ENCODE measurements at regions of chr19 and their contacts with region 1.

Region 1: GRCh38 chr19:1490311-1491113 is at the start of gene PCSK4:
- DNase-seq: peak; percentile 96
- H3K4me3 Mint-ChIP-seq: peak within 1 kb of the TSS; percentile 81
- H3K27ac Mint-ChIP-seq: peak within 1 kb of the TSS; percentile 81
- H3K4me1 Mint-ChIP-seq: peaks cover 11% of the 10 kb centered on the region
- H3K27me3 Mint-ChIP-seq: peaks cover 9% of the 10 kb centered on the region
- total RNA-seq, gene PCSK4: 2.1 and 2.6 TPM in 2 replicates

Region 2: DNA sequence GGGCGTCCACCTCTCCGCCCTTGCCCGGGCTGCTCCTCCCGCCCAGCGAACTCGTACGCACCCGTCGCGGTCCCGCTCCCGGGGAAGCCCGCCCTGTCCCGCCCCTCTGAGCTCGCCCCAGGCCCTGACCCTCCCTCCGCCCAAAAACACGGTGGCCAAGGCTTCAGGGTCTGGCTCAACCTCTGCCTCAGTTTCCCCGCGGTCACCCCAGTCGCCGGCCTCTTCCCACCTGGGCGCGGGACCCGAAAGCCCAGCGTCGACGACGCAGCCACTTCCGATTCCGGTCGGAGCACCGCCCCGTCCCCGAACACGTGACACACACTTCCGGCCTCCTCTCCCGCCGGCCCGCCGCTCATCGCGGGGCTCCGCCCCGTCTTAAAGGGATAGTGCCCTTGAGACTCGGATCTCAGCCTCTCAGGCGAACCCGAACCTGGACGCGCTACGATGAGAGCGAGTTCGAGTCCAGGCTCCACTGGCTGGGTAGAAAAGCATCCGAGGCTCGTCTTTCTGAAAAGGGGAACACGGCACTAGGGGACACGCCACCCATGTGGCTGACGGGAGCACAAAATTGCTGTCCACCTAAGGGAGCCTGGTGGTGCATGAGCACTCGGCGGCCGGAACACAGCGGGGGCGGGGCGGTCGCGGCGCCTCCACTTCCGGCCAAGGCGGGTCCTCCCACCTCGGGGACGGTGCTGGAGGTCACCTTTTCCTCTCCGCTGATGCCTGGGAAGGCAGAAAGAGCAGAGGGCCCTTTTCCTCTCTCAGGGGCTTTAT is 11.4 kb before region 1 on chr19 and contains the start of gene C19orf25:
- intact Hi-C with region 1: loop called (anchors 1 kb)
- DNase-seq: peak; percentile 92
- H3K4me3 Mint-ChIP-seq: peak within 1 kb of the TSS; percentile 96
- H3K27ac Mint-ChIP-seq: peak within 1 kb of the TSS; percentile 93
- H3K4me1 Mint-ChIP-seq: peaks cover 5% of the 10 kb centered on the region
- H3K27me3 Mint-ChIP-seq: no peaks in the 10 kb centered on the region
- total RNA-seq, gene C19orf25: 33.0 and 37.9 TPM in 2 replicates

Region 3: DNA sequence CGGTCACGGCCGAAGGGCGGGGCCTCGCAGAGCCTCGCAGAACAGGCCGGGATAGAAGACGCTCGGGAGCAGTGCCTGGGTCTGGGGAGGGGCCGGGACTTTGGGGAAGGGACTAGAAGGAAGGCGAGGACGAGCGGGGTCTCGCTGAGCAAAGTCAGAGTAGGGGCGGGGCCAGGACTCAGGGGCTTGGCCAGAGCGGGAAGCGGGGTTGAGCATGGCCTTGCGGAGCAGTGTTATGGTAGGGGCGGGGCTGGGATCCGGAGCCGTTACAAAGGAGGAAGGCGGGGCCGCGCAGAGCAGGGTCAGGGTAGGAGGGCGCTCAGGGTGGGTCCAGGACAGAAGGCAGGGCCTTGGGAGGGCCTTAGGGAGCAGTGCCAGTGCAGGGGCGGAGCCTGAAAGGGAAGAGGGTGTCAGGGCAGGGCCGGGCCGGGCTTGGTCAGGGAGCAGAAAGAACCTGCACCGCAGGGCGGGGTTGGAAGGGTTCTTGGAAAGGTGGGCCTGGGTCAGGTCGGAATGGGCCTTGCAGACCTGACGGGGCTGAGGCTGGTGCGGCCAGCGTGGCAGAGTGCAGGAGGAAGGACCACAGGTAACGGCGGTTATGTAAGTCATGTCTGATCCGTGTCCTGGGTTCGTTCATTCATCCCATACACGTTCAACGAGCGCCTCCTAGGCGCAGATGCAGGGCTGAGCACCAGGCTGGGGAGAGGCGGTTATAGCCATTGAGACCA is 322.1 kb after region 1 on chr19:
- intact Hi-C with region 1: loop called (anchors 1 kb)
- DNase-seq: peak; percentile 95
- H3K4me3 Mint-ChIP-seq: peak overlapping the region; percentile 85
- H3K27ac Mint-ChIP-seq: peak overlapping the region; percentile 95
- H3K4me1 Mint-ChIP-seq: peaks cover 11% of the 10 kb centered on the region
- H3K27me3 Mint-ChIP-seq: no peaks in the 10 kb centered on the region